ENCODE measurements at regions of chr13 and their contacts with region 1.

Region 1: DNA sequence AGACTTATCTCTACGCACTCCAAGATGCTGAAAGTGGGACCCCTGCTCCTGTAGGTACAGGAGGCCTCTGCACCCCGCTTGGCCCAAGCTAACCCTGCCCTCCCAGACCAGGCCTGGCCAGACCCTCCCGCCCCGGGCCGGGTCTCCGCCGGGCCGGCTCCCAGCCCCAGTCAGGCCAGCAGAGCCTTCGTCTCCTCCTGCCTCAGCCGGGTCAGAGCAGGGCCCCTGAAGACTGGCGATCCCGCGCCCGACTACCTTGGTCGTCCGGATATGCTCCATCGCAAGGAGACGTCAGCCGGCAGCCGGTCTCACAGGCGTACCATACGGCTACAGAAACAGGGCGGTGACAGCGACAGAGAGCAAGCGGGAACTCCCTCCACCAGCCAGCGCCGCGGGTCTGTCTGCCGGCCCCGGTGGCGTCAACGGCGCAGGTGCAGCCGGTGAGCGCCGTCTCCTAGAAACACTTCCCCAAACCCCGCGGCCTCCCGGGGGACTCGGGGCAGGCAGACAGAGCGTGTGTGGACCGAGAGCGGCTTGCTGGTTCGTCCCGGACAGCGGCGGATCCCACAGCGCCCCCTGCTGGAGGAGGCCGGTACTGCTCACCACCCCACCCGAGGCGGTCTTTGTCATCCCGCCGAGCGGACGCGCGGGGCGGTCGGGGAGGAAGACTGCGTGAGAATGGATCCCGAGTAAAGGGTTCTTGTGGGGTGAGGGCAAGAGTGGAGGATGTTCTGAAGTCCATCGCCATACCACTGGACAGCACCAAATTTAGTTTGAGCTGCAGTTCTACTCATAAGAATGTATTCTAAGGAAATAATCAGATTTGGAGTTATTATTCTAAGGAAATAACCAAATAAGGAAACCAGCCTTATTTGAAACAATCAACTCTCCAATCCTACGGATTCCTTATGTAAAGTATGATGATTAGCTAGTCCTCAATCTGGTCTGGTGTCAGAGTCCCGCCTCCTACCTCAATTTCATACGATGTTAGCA is at the start of gene MTMR6:
- DNase-seq: peak; percentile 99
- ATAC-seq: peak; percentile 88
- H3K4me3 ChIP-seq: peak within 1 kb of the TSS; percentile 74 to 98 (median 94)
- H3K4me3 Mint-ChIP-seq: peak within 1 kb of the TSS; percentile 97
- H3K27ac ChIP-seq: peak within 1 kb of the TSS; percentile 99 to 100
- H3K27ac Mint-ChIP-seq: peak within 1 kb of the TSS; percentile 98
- H3K4me1 ChIP-seq: peaks cover 12 to 17% of the 10 kb centered on the region in 2 donors
- H3K4me1 Mint-ChIP-seq: peaks cover 39% of the 10 kb centered on the region
- H3K27me3 ChIP-seq: peaks cover 0 to 11% (median 2%) of the 10 kb centered on the region in 4 experiments
- H3K27me3 Mint-ChIP-seq: peaks cover 13% of the 10 kb centered on the region
- CTCF ChIP-seq: peak; percentile 99
- total RNA-seq, gene MTMR6: 21.4 and 22.1 TPM in 2 replicates

Region 2: GRCh38 chr13:23375001-23375971 is 1912.0 kb before region 1 on chr13:
- CTCF ChIA-PET with region 1: no interaction called
- POLR2A ChIA-PET with region 1: no interaction called
- intact Hi-C with region 1: loop called (anchors 5 kb)
- DNase-seq: peak; percentile 96
- ATAC-seq: peak; percentile 85
- H3K4me3 ChIP-seq: peak overlapping the region in 4 of 5 experiments; percentile 46 to 69 (median 67)
- H3K4me3 Mint-ChIP-seq: peak overlapping the region; percentile 79
- H3K27ac ChIP-seq: peak overlapping the region; percentile 49 to 51
- H3K27ac Mint-ChIP-seq: peak overlapping the region; percentile 86
- H3K4me1 ChIP-seq: peaks cover 56 to 59% of the 10 kb centered on the region in 2 donors
- H3K4me1 Mint-ChIP-seq: peaks cover 64% of the 10 kb centered on the region
- H3K27me3 ChIP-seq: no peaks in the 10 kb centered on the region
- H3K27me3 Mint-ChIP-seq: no peaks in the 10 kb centered on the region
- CTCF ChIP-seq: peak; percentile 59

Region 3: GRCh38 chr13:23888658-23889614 is 1398.3 kb before region 1 on chr13 and contains the start of gene MIPEP:
- CTCF ChIA-PET with region 1: no interaction called
- POLR2A ChIA-PET with region 1: no interaction called
- intact Hi-C with region 1: loop called (anchors 2 kb)
- DNase-seq: peak; percentile 92
- ATAC-seq: peak; percentile 93
- H3K4me3 ChIP-seq: peak within 1 kb of the TSS; percentile 24 to 96 (median 80)
- H3K4me3 Mint-ChIP-seq: peak within 1 kb of the TSS; percentile 94
- H3K27ac ChIP-seq: peak within 1 kb of the TSS; percentile 42 to 86
- H3K27ac Mint-ChIP-seq: peak within 1 kb of the TSS; percentile 95
- H3K4me1 ChIP-seq: peaks cover 12 to 17% of the 10 kb centered on the region in 2 donors
- H3K4me1 Mint-ChIP-seq: peaks cover 23% of the 10 kb centered on the region
- H3K27me3 ChIP-seq: no peaks in the 10 kb centered on the region
- H3K27me3 Mint-ChIP-seq: no peaks in the 10 kb centered on the region
- CTCF ChIP-seq: peak; percentile 69
- total RNA-seq, gene MIPEP: 15.7 and 16.9 TPM in 2 replicates

Region 4: DNA sequence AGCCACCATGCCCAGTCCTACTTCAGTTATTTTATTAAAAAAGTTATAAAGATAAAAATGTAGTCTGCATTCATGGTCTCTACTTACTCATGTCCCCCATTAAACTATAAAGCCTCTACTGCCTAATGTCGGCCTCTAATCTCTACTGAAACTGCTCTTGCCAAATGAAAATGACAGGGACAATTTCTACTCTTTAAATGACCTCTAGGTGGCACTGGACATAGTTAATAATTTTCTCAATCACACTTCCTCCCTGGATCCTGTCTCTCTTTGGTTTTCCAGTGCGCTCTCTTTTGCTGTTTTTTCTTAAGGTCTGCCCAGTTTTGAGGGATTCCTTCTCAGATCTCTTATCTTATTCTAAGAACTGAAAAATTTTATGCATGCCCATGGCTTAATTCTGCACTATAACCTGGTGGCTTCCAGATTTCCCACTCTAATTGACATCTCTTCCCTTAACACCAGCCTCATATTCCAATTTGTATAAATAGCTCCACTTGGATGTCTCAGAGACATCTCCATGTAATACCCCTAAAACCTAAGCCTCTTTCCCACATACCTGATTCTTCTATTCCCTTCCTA is 54.2 kb before region 1 on chr13:
- CTCF ChIA-PET with region 1: interaction called, 4 read pairs
- POLR2A ChIA-PET with region 1: no interaction called
- intact Hi-C with region 1: loop called (anchors 1 kb)
- DNase-seq: peak; percentile 64
- ATAC-seq: no peak
- H3K4me3 ChIP-seq: no peak overlapping the region
- H3K4me3 Mint-ChIP-seq: no peak overlapping the region
- H3K27ac ChIP-seq: no peak overlapping the region
- H3K27ac Mint-ChIP-seq: no peak overlapping the region
- H3K4me1 ChIP-seq: peaks cover 0 to 3% of the 10 kb centered on the region in 2 donors
- H3K4me1 Mint-ChIP-seq: peaks cover 18% of the 10 kb centered on the region
- H3K27me3 ChIP-seq: peaks cover 0 to 4% (median 0%) of the 10 kb centered on the region in 4 experiments
- H3K27me3 Mint-ChIP-seq: peaks cover 20% of the 10 kb centered on the region
- CTCF ChIP-seq: peak; percentile 80

Region 5: DNA sequence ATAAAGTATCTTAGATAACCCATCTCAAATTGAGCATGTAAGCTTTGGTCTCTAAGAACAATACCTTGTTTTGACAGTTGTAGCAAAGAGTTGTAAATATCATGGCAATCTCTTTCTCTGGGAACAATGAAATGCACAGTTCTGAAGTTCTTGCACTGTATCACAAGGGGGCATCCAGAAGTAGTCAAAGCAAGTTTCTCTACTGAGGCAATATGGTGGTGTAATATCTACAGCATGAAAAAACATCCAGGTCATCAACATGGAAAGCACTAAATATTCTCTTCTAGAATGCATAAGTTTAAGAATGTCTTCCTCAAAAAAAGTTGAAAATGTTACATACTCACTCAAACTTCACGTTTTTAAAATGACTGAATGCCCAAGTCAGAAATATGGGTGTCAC is 19.6 kb before region 1 on chr13:
- CTCF ChIA-PET with region 1: interaction called, 4 read pairs
- POLR2A ChIA-PET with region 1: no interaction called
- intact Hi-C with region 1: loop called (anchors 1 kb)
- DNase-seq: peak; percentile 38
- ATAC-seq: peak; percentile 63
- H3K4me3 ChIP-seq: no peak overlapping the region
- H3K4me3 Mint-ChIP-seq: no peak overlapping the region
- H3K27ac ChIP-seq: no peak overlapping the region
- H3K27ac Mint-ChIP-seq: peak overlapping the region; percentile 43
- H3K4me1 ChIP-seq: no peaks in the 10 kb centered on the region
- H3K4me1 Mint-ChIP-seq: peaks cover 4% of the 10 kb centered on the region
- H3K27me3 ChIP-seq: no peaks in the 10 kb centered on the region
- H3K27me3 Mint-ChIP-seq: no peaks in the 10 kb centered on the region
- CTCF ChIP-seq: no peak

Region 6: DNA sequence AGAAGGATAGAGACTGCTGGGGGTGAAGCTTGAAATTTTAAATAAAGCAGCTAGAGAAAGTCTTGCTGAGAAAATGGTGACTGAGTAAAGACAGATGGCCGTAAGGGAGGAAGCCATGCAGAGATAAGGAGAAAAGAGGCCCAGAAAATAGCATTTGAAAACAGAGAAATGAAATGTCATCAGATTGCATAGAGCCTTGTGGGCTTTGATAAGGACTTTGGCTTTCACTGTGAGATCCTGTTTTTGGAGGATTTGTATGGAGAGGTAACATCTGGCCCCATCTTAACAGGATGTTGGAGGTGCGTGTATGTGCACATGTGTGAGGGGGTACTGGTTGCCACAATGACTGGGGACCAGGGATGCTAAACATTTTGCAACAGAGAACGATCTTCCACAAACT is 65.0 kb after region 1 on chr13:
- CTCF ChIA-PET with region 1: no interaction called
- POLR2A ChIA-PET with region 1: no interaction called
- intact Hi-C with region 1: no loop called
- DNase-seq: no peak
- ATAC-seq: no peak
- H3K4me3 ChIP-seq: no peak overlapping the region
- H3K4me3 Mint-ChIP-seq: no peak overlapping the region
- H3K27ac ChIP-seq: no peak overlapping the region
- H3K27ac Mint-ChIP-seq: no peak overlapping the region
- H3K4me1 ChIP-seq: no peaks in the 10 kb centered on the region
- H3K4me1 Mint-ChIP-seq: no peaks in the 10 kb centered on the region
- H3K27me3 ChIP-seq: no peaks in the 10 kb centered on the region
- H3K27me3 Mint-ChIP-seq: peaks cover 38% of the 10 kb centered on the region
- CTCF ChIP-seq: no peak

Region 7: GRCh38 chr13:25525884-25526283 is 238.6 kb after region 1 on chr13:
- CTCF ChIA-PET with region 1: no interaction called
- POLR2A ChIA-PET with region 1: no interaction called
- intact Hi-C with region 1: no loop called
- DNase-seq: no peak
- ATAC-seq: no peak
- H3K4me3 ChIP-seq: no peak overlapping the region
- H3K4me3 Mint-ChIP-seq: no peak overlapping the region
- H3K27ac ChIP-seq: no peak overlapping the region
- H3K27ac Mint-ChIP-seq: no peak overlapping the region
- H3K4me1 ChIP-seq: no peaks in the 10 kb centered on the region
- H3K4me1 Mint-ChIP-seq: no peaks in the 10 kb centered on the region
- H3K27me3 ChIP-seq: no peaks in the 10 kb centered on the region
- H3K27me3 Mint-ChIP-seq: peaks cover 14% of the 10 kb centered on the region
- CTCF ChIP-seq: no peak

Region 8: DNA sequence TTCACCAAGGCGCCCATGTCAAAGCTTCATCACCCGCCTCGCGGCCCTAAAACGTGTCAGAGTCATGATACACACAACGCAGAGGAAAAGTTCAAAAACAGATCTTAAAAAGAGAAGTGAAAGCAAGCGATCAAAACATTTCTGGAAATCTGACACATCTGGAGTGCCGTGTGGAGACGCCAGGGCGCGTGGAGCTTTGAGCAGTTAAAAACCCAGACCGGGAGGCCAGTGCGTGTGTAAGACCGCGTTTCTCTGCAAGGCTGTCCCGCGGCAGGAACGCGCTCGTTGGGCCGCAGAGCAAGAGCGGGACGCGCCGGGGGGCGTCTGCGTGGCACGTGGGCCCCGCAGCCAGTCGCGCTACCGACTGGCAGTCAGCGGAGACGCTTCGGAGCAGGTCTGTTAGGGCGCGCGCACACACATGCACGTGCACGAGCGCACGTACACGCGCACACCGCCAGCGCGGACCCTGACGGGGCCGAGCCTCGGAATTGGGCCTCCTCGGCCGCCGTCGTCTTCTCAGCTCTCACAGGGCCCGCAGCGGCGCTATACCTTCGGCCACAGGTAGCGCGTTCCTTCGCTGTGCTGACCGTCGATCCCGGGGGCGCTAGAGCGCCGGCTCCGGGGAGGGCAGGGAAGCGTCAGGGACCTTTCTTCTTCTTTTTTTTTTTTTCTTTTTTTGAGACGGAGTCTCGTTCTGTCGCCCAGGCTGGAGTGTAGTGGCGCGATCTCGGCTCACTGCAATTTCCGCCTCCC is 899.0 kb after region 1 on chr13:
- CTCF ChIA-PET with region 1: interaction called, 12 read pairs
- POLR2A ChIA-PET with region 1: no interaction called
- intact Hi-C with region 1: no loop called
- DNase-seq: peak; percentile 99
- ATAC-seq: peak; percentile 87
- H3K4me3 ChIP-seq: peak overlapping the region; percentile 66 to 91 (median 73)
- H3K4me3 Mint-ChIP-seq: peak overlapping the region; percentile 91
- H3K27ac ChIP-seq: peak overlapping the region; percentile 86 to 88
- H3K27ac Mint-ChIP-seq: peak overlapping the region; percentile 96
- H3K4me1 ChIP-seq: peaks cover 33 to 44% of the 10 kb centered on the region in 2 donors
- H3K4me1 Mint-ChIP-seq: peaks cover 46% of the 10 kb centered on the region
- H3K27me3 ChIP-seq: no peaks in the 10 kb centered on the region
- H3K27me3 Mint-ChIP-seq: no peaks in the 10 kb centered on the region
- CTCF ChIP-seq: peak; percentile 72

Region 9: DNA sequence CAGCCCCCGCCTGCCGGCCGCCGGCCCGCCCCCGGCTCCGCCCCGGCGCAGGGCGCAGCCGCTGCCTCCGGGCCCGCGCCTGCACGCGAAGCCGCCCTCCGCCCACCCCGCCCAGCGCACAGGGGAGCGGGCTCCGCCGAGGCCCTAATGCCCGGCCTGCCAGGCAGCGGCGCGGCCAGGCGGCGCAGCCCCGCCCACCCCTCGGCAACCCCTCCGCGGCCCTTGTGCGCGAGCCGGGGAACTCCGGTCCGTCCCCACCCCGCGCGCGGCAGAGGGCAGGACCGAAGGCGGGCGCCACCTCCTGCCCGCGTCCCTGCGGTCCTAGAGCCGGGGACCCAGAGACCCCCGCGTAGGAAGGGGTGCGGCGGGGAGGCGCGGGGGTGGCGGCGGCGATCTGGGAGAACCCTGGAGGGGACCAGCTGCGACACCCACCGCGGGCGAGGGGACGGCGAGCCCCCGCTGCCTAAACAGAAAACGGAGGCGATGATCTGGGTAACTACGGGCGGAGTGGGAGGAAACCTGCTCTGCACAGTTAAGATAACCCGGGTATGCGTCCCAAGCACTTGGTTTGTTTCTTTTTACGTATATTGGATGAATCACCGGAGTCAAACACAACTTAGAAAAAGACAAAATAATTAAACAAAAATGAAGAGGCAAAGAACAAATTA is 1884.7 kb after region 1 on chr13:
- CTCF ChIA-PET with region 1: no interaction called
- POLR2A ChIA-PET with region 1: no interaction called
- intact Hi-C with region 1: loop called (anchors 5 kb)
- DNase-seq: peak; percentile 95
- ATAC-seq: peak; percentile 88
- H3K4me3 ChIP-seq: peak overlapping the region; percentile 61 to 86 (median 83)
- H3K4me3 Mint-ChIP-seq: peak overlapping the region; percentile 86
- H3K27ac ChIP-seq: peak overlapping the region; percentile 92 to 94
- H3K27ac Mint-ChIP-seq: peak overlapping the region; percentile 95
- H3K4me1 ChIP-seq: peaks cover 43 to 54% of the 10 kb centered on the region in 2 donors
- H3K4me1 Mint-ChIP-seq: peaks cover 67% of the 10 kb centered on the region
- H3K27me3 ChIP-seq: no peaks in the 10 kb centered on the region
- H3K27me3 Mint-ChIP-seq: no peaks in the 10 kb centered on the region
- CTCF ChIP-seq: no peak

Measured in B cell (primary cell).